Activated T-helper 1 cell treated with anti-CD3 and anti-CD28 coated beads, Interleukin-12 subunit alpha, Interleukin-12 subunit beta, Interleukin-2, Interleukin-4 antibody, amounts not matched to agents 30 ng/mL and 10 ng/mL and 1 ng/mL, durations not matched to agents 14 hours and 24 hours and 36 hours (primary cell): ENCODE measurements at regions of chr14 and their contacts with region 1.

Region 1: GRCh38 chr14:75522224-75522982 is at the start of gene BATF:
- DNase-seq: peak; percentile 79
- H3K4me3 Mint-ChIP-seq: peak within 1 kb of the TSS; percentile 96
- H3K27ac Mint-ChIP-seq: peak within 1 kb of the TSS; percentile 95
- H3K4me1 Mint-ChIP-seq: peaks cover 71% of the 10 kb centered on the region
- H3K27me3 Mint-ChIP-seq: no peaks in the 10 kb centered on the region
- total RNA-seq, gene BATF: 213 and 214 TPM in 2 replicates

Region 2: DNA sequence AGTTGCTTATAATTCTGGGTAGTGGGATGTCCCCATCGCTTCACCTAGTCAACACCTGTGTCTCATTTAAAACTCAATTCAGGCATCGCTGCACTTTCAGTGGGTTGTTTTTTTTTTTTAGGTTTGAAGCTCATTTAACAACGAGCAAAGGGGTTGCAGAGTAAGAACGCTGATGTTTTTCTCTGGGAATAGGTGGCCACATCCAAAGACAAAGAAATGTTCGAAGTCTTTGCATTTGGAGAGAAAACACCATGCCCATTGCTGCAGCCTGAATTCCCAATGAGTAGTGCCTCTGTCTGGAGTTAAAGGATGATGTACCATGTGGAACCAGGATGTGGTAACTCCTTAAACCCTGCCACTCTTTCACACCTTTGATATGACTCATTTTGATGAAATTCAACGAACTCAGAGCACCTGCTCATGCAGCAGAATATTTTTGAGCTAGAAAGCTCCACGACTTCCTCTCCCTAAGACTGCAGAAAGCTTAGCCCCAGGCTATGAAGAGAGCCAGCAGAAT is 35.2 kb before region 1 on chr14:
- intact Hi-C with region 1: loop called (anchors 1 kb)
- DNase-seq: peak; percentile 43
- H3K4me3 Mint-ChIP-seq: no peak overlapping the region
- H3K27ac Mint-ChIP-seq: peak overlapping the region; percentile 72
- H3K4me1 Mint-ChIP-seq: peaks cover 47% of the 10 kb centered on the region
- H3K27me3 Mint-ChIP-seq: no peaks in the 10 kb centered on the region

Region 3: GRCh38 chr14:75533791-75534555 is 11.6 kb after region 1 on chr14:
- intact Hi-C with region 1: loop called (anchors 1 kb)
- DNase-seq: no peak
- H3K4me3 Mint-ChIP-seq: peak overlapping the region; percentile 21
- H3K27ac Mint-ChIP-seq: peak overlapping the region; percentile 62
- H3K4me1 Mint-ChIP-seq: peaks cover 73% of the 10 kb centered on the region
- H3K27me3 Mint-ChIP-seq: no peaks in the 10 kb centered on the region

Region 4: GRCh38 chr14:75566321-75566720 is 43.9 kb after region 1 on chr14:
- intact Hi-C with region 1: loop called (anchors 1 kb)
- DNase-seq: peak; percentile 68
- H3K4me3 Mint-ChIP-seq: peak overlapping the region; percentile 66
- H3K27ac Mint-ChIP-seq: peak overlapping the region; percentile 87
- H3K4me1 Mint-ChIP-seq: peaks cover 76% of the 10 kb centered on the region
- H3K27me3 Mint-ChIP-seq: no peaks in the 10 kb centered on the region

Region 5: GRCh38 chr14:75660630-75661494 is 138.5 kb after region 1 on chr14 and contains the starts of genes ERG28 and TTLL5:
- intact Hi-C with region 1: loop called (anchors 1 kb)
- DNase-seq: peak; percentile 97
- H3K4me3 Mint-ChIP-seq: peak within 1 kb of the TSS; percentile 100
- H3K27ac Mint-ChIP-seq: peak within 1 kb of the TSS; percentile 94
- H3K4me1 Mint-ChIP-seq: peaks cover 38% of the 10 kb centered on the region
- H3K27me3 Mint-ChIP-seq: no peaks in the 10 kb centered on the region
- total RNA-seq, gene ERG28: 17.5 and 17.8 TPM in 2 replicates
- total RNA-seq, gene TTLL5: 36.2 and 39.0 TPM in 2 replicates